Activated CD4-positive, alpha-beta T cell treated with anti-CD3 and anti-CD28 coated beads, Interleukin-2, amount 10 ng/mL, durations not matched to agents 24 days and 14 days (primary cell): ENCODE measurements at regions of chr11 and their contacts with region 1.

Region 1: GRCh38 chr11:47980245-47981049 is at the start of gene PTPRJ:
- DNase-seq: peak; percentile 90
- H3K4me3 Mint-ChIP-seq: peak within 1 kb of the TSS; percentile 87
- H3K27ac Mint-ChIP-seq: peak within 1 kb of the TSS; percentile 72
- H3K4me1 Mint-ChIP-seq: peaks cover 24% of the 10 kb centered on the region
- H3K27me3 Mint-ChIP-seq: peaks cover 14% of the 10 kb centered on the region
- total RNA-seq, gene PTPRJ: 51.3 and 52.2 TPM in 2 replicates

Region 2: DNA sequence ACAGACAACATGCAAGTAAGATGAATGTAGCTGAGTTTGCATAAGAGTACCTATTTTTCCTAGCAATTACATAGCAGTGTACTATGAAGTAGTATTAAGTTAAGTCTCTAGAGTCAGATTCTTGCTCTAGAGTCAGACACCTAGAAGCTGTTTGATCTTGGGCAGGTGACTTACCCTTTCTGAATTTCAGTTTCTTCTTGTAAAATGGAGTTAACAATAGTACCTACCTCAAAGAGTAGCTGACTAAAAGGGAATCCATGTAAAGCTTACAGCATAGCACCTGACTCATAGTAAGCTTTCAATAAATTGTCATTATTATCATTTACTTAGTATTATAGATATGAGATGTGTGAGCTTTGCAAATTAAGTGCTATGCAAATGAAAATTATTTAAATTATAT is 47.9 kb before region 1 on chr11:
- intact Hi-C with region 1: loop called (anchors 2 kb)
- DNase-seq: no peak
- H3K4me3 Mint-ChIP-seq: no peak overlapping the region
- H3K27ac Mint-ChIP-seq: no peak overlapping the region
- H3K4me1 Mint-ChIP-seq: peaks cover 22% of the 10 kb centered on the region
- H3K27me3 Mint-ChIP-seq: no peaks in the 10 kb centered on the region

Region 3: GRCh38 chr11:47991266-47991830 is 10.9 kb after region 1 on chr11:
- intact Hi-C with region 1: loop called (anchors 1 kb)
- DNase-seq: no peak
- H3K4me3 Mint-ChIP-seq: peak overlapping the region; percentile 61
- H3K27ac Mint-ChIP-seq: peak overlapping the region; percentile 85
- H3K4me1 Mint-ChIP-seq: peaks cover 54% of the 10 kb centered on the region
- H3K27me3 Mint-ChIP-seq: no peaks in the 10 kb centered on the region

Region 4: GRCh38 chr11:48020092-48020755 is 39.8 kb after region 1 on chr11:
- intact Hi-C with region 1: loop called (anchors 1 kb)
- DNase-seq: no peak
- H3K4me3 Mint-ChIP-seq: peak overlapping the region; percentile 49
- H3K27ac Mint-ChIP-seq: peak overlapping the region; percentile 87
- H3K4me1 Mint-ChIP-seq: peaks cover 73% of the 10 kb centered on the region
- H3K27me3 Mint-ChIP-seq: no peaks in the 10 kb centered on the region